Calu3 (cell line): ENCODE measurements at regions of chr3 and their contacts with region 1.

Region 1: DNA sequence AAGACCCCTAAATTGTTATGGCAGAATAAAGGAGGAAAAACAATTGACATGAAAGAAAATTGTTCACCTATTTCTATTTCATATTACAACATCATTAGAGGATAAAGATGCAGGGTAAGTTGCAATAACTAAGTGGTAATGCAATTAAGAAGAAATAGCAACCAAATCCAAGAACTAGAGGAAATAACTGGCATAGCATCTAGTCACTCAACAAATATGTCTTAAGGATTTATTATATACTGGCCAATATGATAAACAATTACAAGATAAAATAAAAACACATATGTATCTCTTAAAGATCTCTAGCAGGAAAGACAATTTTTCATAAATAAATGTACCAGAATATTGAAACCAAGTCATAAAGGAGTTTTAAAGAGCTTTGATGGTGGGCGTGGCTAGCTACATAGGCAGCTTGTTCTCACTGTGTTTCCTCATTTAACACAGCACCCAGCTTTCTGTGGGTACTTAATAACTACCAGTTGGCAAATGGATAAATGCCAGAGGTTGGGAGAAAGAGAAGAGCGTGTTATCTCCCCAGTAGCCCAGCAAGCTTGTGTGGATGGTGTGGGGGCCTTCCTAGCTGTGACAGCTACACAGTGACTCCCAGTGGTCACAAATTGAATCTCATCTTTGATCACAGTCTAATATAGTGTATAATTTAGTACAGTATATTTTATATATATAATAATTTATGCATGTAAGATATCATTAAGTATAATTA is 983.9 kb downstream of the EPHA3 start:
- DNase-seq: peak; percentile 51
- H3K4me3 Mint-ChIP-seq: no peak overlapping the region
- H3K27ac Mint-ChIP-seq: no peak overlapping the region
- H3K4me1 Mint-ChIP-seq: peaks cover 7% of the 10 kb centered on the region
- H3K27me3 Mint-ChIP-seq: no peaks in the 10 kb centered on the region
- CTCF ChIP-seq: peak; percentile 40

Region 2: DNA sequence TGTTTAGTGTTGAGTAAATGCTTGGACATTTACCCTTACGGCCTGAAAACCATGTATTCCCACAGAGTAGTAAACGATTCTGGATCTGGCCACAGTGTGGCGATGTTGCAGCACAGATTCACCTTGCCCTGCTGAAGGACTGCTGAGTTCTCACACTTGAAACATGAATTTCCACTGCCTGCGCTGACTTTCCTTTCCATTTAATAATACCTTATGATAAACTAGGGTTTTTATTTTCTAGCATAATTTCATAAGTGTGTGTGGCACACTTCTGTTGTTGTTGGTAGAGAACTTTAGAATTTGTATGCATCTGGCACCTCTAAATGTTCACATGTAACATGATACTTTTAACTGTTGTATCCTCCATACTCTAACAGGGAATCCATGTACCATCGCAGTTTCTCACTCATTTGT is 1887.7 kb before region 1 on chr3:
- CTCF ChIA-PET with region 1: interaction called, 3 read pairs
- intact Hi-C with region 1: loop called (anchors 2 kb)
- DNase-seq: peak; percentile 79
- H3K4me3 Mint-ChIP-seq: no peak overlapping the region
- H3K27ac Mint-ChIP-seq: no peak overlapping the region
- H3K4me1 Mint-ChIP-seq: peaks cover 19% of the 10 kb centered on the region
- H3K27me3 Mint-ChIP-seq: no peaks in the 10 kb centered on the region
- CTCF ChIP-seq: peak; percentile 63

Region 3: DNA sequence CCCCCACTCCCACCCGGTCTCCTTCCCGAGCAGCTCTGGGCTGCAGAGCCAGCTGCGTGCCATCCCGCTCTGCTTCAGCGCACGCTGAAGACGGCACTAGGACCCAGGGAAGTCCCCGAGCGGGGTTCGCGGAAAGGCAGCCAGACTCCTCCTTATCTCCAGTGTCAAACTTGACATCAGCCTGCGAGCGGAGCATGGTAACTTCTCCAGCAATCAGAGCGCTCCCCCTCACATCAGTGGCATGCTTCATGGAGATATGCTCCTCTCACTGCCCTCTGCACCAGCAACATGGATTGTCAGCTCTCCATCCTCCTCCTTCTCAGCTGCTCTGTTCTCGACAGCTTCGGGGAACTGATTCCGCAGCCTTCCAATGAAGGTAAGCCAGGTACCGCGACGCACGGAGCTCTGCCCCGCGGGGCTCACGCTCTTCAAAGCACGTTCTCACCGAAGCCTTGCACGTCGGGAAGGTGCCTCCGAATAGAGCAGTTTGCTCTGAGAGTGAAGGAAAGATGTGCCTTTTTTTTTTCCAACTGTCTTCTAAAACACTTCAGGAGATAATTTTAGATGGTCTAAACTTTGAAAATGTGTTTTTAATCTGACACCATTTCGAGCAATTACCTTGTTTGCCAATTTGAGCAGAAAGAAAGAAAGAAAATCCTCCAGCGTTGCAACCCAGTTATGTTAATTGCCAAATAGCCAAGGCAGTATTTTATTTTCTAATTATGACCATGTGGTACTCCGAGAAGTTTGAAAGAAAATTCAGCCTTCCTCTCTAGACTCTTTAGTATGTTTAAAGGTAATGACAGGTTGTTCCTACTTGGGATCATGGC is 983.7 kb before region 1 on chr3 and contains the start of gene EPHA3:
- CTCF ChIA-PET with region 1: no interaction called
- intact Hi-C with region 1: loop called (anchors 5 kb)
- DNase-seq: peak; percentile 89
- H3K4me3 Mint-ChIP-seq: peak within 1 kb of the TSS; percentile 79
- H3K27ac Mint-ChIP-seq: peak within 1 kb of the TSS; percentile 50
- H3K4me1 Mint-ChIP-seq: peaks cover 11% of the 10 kb centered on the region
- H3K27me3 Mint-ChIP-seq: no peaks in the 10 kb centered on the region
- CTCF ChIP-seq: no peak
- total RNA-seq, gene EPHA3: 28.8 and 31.6 TPM in 2 replicates

Region 4: DNA sequence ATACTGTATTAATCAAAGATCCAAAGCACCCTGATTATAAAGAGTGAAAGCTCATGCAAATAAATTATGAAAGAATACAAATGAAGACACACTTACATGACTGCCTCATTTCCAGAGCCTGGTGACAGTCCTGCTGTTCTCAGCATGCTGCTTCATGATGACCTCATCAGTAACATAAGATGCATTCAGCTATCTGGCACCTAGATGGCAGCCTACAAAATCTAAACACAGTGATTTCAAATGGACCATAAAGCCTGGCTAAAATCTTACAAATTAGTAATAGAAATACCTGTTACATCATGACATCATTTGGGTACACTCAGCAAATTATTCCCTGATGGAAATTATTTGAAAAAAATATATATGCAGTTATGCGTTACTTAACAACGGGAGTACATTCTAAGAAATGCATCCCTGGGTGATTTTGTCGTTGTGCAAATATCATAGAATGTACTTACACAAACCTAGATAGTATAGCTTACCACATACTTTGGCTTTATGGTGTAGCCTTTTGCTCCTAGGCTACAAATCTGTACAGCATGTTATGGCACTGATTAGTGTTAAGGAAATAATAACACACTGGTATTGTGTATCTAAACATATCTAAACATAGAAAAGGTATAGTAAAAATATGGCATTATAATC is 776.8 kb before region 1 on chr3:
- CTCF ChIA-PET with region 1: no interaction called
- intact Hi-C with region 1: loop called (anchors 10 kb)
- DNase-seq: no peak
- H3K4me3 Mint-ChIP-seq: no peak overlapping the region
- H3K27ac Mint-ChIP-seq: no peak overlapping the region
- H3K4me1 Mint-ChIP-seq: no peaks in the 10 kb centered on the region
- H3K27me3 Mint-ChIP-seq: no peaks in the 10 kb centered on the region
- CTCF ChIP-seq: no peak

Region 5: DNA sequence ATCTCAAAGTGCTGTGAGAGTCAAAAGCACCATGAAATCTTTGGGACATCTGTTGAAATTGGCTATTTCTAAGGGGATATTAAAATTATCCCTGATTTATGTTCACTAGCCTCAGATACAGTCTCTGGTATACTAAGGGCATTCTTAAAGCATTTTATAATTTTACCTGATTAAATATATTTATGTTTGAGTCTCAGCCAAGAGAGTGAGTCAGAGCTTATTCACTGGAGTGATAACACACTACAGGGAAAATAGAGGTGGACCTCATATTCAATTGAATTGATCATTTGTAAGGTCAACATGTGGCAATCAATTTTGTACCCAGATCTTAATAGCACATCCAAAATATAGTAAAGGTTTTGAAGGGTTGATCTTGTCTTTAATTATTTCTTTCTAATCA is 250.3 kb before region 1 on chr3:
- CTCF ChIA-PET with region 1: no interaction called
- intact Hi-C with region 1: no loop called
- DNase-seq: no peak
- H3K4me3 Mint-ChIP-seq: no peak overlapping the region
- H3K27ac Mint-ChIP-seq: no peak overlapping the region
- H3K4me1 Mint-ChIP-seq: peaks cover 14% of the 10 kb centered on the region
- H3K27me3 Mint-ChIP-seq: no peaks in the 10 kb centered on the region
- CTCF ChIP-seq: no peak

Region 6: DNA sequence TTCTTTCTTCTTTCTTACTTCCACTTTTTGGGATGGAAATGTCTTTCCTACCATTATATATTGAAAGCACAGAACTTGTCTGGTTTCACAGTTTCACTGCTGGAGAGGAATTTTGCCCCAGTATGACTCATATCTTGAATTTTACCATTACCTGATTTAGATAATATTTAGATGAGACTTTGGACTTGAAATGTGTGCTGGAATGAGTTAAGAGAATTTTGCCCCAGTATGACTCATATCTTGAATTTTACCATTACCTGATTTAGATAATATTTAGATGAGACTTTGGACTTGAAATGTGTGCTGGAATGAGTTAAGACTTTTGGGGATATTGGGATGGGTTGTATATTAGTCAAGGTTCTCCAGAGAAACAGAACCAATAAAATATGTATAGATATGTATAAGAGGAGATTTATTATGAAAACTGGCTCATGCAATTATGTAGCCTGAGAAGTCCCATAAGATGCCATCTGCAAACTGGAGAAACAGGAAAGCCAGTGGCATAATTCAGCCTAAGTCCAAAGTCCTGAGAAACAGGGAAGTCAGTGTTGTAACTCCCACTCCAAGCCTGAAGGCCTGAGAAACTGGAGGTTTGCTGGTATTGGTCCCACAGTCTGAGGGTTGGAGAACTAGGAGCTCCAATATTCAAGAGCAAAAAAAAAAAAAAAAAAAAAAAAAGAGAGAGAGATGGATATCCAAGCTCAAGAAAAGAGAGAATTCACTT is 45.3 kb after region 1 on chr3:
- CTCF ChIA-PET with region 1: no interaction called
- intact Hi-C with region 1: loop called (anchors 2 kb)
- DNase-seq: peak; percentile 59
- H3K4me3 Mint-ChIP-seq: peak overlapping the region; percentile 25
- H3K27ac Mint-ChIP-seq: peak overlapping the region; percentile 71
- H3K4me1 Mint-ChIP-seq: peaks cover 36% of the 10 kb centered on the region
- H3K27me3 Mint-ChIP-seq: no peaks in the 10 kb centered on the region
- CTCF ChIP-seq: no peak

Region 7: GRCh38 chr3:90184861-90185260 is 93.5 kb after region 1 on chr3:
- CTCF ChIA-PET with region 1: interaction called, 4 read pairs
- intact Hi-C with region 1: loop called (anchors 5 kb)
- DNase-seq: no peak
- H3K4me3 Mint-ChIP-seq: no peak overlapping the region
- H3K27ac Mint-ChIP-seq: no peak overlapping the region
- H3K4me1 Mint-ChIP-seq: no peaks in the 10 kb centered on the region
- H3K27me3 Mint-ChIP-seq: no peaks in the 10 kb centered on the region
- CTCF ChIP-seq: no peak